ENCODE measurements at regions of chr1 and their contacts with region 1.

Region 1: GRCh38 chr1:175146529-175147213 is 45.9 kb downstream of the KIAA0040 start:
- DNase-seq: peak; percentile 85
- H3K4me3 ChIP-seq: peak overlapping the region in 1 of 2 experiments; percentile 59; a peak in 1 of 4 replicates
- H3K27ac ChIP-seq: no peak overlapping the region
- H3K4me1 ChIP-seq: no peaks in the 10 kb centered on the region
- H3K27me3 ChIP-seq: 0 out of 2 replicates have a peak, but pooled peaks cover 7% of the 10 kb centered on the region
- CTCF ChIP-seq: peak; percentile 78
- EP300 ChIP-seq: no peak
- RAD21 ChIP-seq: peak; percentile 60

Region 2: GRCh38 chr1:175023043-175023921 is 123.4 kb before region 1 on chr1 and contains the start of gene MRPS14:
- CTCF ChIA-PET with region 1: interaction called, 10 read pairs
- POLR2A ChIA-PET with region 1: no interaction called
- DNase-seq: peak; percentile 91
- H3K4me3 ChIP-seq: peak within 1 kb of the TSS; percentile 85 to 94
- H3K27ac ChIP-seq: peak within 1 kb of the TSS; percentile 76 to 85
- H3K4me1 ChIP-seq: peaks cover 0 to 9% of the 10 kb centered on the region in 2 experiments; a peak in 2 of 4 replicates
- H3K27me3 ChIP-seq: no peaks in the 10 kb centered on the region
- CTCF ChIP-seq: no peak
- EP300 ChIP-seq: peak in 1 of 2 experiments; percentile 22; a peak in 1 of 4 replicates
- RAD21 ChIP-seq: no peak
- polyA plus RNA-seq, gene MRPS14: 18.2 and 18.7 TPM in 2 replicates

Region 3: GRCh38 chr1:175089136-175089718 is 57.4 kb before region 1 on chr1:
- CTCF ChIA-PET with region 1: interaction called, 10 read pairs
- POLR2A ChIA-PET with region 1: no interaction called
- DNase-seq: no peak
- H3K4me3 ChIP-seq: no peak overlapping the region
- H3K27ac ChIP-seq: peak overlapping the region in 1 of 2 experiments; percentile 71; a peak in 2 of 4 replicates
- H3K4me1 ChIP-seq: peaks cover 0 to 23% of the 10 kb centered on the region in 2 experiments; a peak in 2 of 4 replicates
- H3K27me3 ChIP-seq: no peaks in the 10 kb centered on the region; the same call in 1 of the 2 replicates
- CTCF ChIP-seq: no peak
- EP300 ChIP-seq: no peak
- RAD21 ChIP-seq: no peak

Region 4: GRCh38 chr1:175124861-175125260 is 21.8 kb before region 1 on chr1:
- CTCF ChIA-PET with region 1: interaction called, 54 read pairs
- POLR2A ChIA-PET with region 1: interaction called, 3 read pairs
- DNase-seq: no peak
- H3K4me3 ChIP-seq: no peak overlapping the region
- H3K27ac ChIP-seq: no peak overlapping the region
- H3K4me1 ChIP-seq: peaks cover 0 to 3% of the 10 kb centered on the region in 2 experiments; a peak in 1 of 4 replicates
- H3K27me3 ChIP-seq: no peaks in the 10 kb centered on the region
- CTCF ChIP-seq: no peak
- EP300 ChIP-seq: no peak
- RAD21 ChIP-seq: no peak

Region 5: GRCh38 chr1:175129997-175130648 is 16.5 kb before region 1 on chr1:
- CTCF ChIA-PET with region 1: interaction called, 54 read pairs
- POLR2A ChIA-PET with region 1: interaction called, 3 read pairs
- DNase-seq: peak; percentile 44
- H3K4me3 ChIP-seq: no peak overlapping the region
- H3K27ac ChIP-seq: peak overlapping the region in 1 of 2 experiments; percentile 60; a peak in 2 of 4 replicates
- H3K4me1 ChIP-seq: peaks cover 0 to 10% of the 10 kb centered on the region in 2 experiments; a peak in 1 of 4 replicates
- H3K27me3 ChIP-seq: no peaks in the 10 kb centered on the region
- CTCF ChIP-seq: no peak
- EP300 ChIP-seq: peak in 1 of 2 experiments; percentile 34; a peak in 1 of 4 replicates
- RAD21 ChIP-seq: no peak

Region 6: GRCh38 chr1:175162955-175163354 is 16.3 kb after region 1 on chr1:
- CTCF ChIA-PET with region 1: interaction called, 51 read pairs
- POLR2A ChIA-PET with region 1: no interaction called
- DNase-seq: no peak
- H3K4me3 ChIP-seq: no peak overlapping the region
- H3K27ac ChIP-seq: no peak overlapping the region
- H3K4me1 ChIP-seq: no peaks in the 10 kb centered on the region
- H3K27me3 ChIP-seq: no peaks in the 10 kb centered on the region
- CTCF ChIP-seq: no peak
- EP300 ChIP-seq: no peak
- RAD21 ChIP-seq: no peak

Region 7: DNA sequence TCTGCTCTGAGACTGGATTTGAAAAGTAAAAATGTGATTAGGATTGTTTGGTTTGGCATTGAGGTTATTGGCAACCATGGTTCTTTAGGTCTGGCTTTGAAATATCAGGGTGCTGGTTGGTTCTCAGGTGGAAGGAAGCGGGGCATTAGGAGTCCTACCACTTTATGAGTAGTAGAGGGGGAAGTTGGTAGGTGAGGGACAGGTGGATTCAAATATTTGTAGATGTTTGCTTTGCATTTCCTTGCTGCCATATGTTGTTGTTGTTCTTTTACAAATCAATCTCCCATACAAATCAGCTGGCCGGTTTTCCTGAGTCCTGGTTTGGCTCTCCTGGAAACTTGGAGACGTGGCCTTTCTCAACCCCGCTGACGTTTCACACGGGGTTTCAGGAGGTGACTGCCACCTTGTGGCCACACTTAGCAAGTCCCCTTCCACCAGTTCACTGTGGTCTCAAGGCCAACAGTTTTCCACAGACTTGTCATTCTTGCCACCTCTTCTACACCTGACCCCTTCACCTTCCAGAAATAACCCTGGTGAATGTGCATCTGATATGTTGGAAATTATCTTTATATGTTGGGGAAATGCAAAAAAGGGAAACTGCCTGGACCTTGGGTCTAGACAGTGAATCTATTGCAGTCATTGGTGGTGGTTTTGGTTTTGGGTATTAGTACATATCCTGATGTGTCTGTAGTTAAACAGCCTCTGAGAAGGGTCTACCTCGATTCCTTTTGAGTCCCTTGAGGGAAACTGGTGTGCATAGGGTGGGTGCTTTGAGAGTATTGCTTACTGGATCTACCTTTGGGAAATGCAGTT is 173.0 kb after region 1 on chr1:
- CTCF ChIA-PET with region 1: interaction called, 281 read pairs
- POLR2A ChIA-PET with region 1: no interaction called
- DNase-seq: peak; percentile 74
- H3K4me3 ChIP-seq: peak overlapping the region in 1 of 2 experiments; percentile 42; a peak in 1 of 4 replicates
- H3K27ac ChIP-seq: no peak overlapping the region
- H3K4me1 ChIP-seq: peaks cover 0 to 3% of the 10 kb centered on the region in 2 experiments; a peak in 1 of 4 replicates
- H3K27me3 ChIP-seq: no peaks in the 10 kb centered on the region
- CTCF ChIP-seq: peak; percentile 56
- EP300 ChIP-seq: no peak
- RAD21 ChIP-seq: peak; percentile 89